Transverse colon (tissue), 4 donors: ENCODE measurements at regions of chr3 and their contacts with region 1.

Region 1: DNA sequence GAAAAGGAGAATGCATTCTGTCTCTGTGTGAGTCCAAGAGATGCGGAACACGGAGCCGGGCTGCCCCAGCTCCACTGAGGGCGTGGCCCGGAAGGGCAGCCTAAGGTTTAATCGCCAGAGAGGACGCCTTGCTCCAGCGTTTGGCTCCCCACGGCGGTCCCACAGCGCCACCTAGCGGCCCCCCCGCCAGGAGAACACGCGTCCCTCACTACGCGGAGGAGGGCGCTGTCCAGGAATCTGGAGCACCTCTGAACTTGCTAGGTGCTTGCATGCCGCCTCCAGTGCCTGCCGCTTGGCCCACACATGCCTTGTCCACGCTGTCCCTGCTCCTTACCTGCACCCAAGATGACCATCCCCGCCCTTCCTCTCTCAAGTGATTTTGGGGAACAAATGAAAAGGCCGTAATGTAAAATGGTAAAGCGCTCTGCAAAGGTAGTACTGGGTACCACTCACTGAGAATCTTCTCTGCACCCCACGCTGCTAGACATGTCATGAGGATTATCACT is 14.4 kb upstream of the MRPS22 start:
- DNase-seq: peak; percentile 92
- H3K4me3 ChIP-seq: peak overlapping the region in 1 of 4 donors; percentile 13
- H3K27ac ChIP-seq: no peak overlapping the region
- H3K4me1 ChIP-seq: peaks cover 0 to 7% (median 2%) of the 10 kb centered on the region in 4 donors
- H3K27me3 ChIP-seq: peaks cover 28% of the 10 kb centered on the region
- CTCF ChIP-seq: peak; percentile 92 to 99 (median 97)
- EP300 ChIP-seq: no peak
- POLR2A ChIP-seq: no peak

Region 2: DNA sequence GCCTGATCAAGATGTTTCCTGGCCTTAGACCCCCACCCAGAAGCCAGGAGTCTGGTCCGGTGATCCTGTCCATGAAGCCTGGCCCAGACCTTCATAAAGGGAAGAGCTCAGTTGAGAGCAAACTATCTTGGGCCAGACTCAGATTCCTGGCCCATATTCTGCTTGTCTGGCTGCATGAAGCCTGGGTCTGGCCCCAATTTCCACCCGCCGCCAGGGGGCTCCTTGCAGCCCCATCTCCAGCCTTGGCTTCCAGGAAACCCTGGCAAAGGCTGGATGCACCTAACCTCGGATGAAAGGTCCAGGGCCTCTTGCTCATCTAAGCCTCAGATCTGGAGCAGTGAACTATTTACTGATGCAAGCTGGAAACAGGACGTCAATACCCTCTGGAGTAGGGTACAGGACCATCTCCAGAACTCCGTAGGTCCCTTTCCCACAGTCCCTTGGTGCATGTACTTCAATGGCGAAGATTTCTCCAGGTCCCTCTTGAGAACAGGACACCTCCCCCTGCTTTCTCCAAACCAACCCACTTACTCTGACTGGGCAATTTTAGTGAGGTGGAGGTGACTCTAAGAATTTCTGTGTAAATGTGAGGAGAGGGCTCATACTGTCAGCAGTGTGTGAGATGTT is 388.0 kb before region 1 on chr3:
- in situ Hi-C with region 1: loop called (anchors 10 to 25 kb)
- intact Hi-C with region 1: loop called (anchors 10 kb)
- DNase-seq: peak; percentile 54
- H3K4me3 ChIP-seq: no peak overlapping the region
- H3K27ac ChIP-seq: no peak overlapping the region
- H3K4me1 ChIP-seq: peaks cover 26 to 61% (median 41%) of the 10 kb centered on the region in 4 donors
- H3K27me3 ChIP-seq: peaks cover 100% of the 10 kb centered on the region
- CTCF ChIP-seq: peak; percentile 21 to 55 (median 41)
- EP300 ChIP-seq: no peak
- POLR2A ChIP-seq: no peak

Region 3: DNA sequence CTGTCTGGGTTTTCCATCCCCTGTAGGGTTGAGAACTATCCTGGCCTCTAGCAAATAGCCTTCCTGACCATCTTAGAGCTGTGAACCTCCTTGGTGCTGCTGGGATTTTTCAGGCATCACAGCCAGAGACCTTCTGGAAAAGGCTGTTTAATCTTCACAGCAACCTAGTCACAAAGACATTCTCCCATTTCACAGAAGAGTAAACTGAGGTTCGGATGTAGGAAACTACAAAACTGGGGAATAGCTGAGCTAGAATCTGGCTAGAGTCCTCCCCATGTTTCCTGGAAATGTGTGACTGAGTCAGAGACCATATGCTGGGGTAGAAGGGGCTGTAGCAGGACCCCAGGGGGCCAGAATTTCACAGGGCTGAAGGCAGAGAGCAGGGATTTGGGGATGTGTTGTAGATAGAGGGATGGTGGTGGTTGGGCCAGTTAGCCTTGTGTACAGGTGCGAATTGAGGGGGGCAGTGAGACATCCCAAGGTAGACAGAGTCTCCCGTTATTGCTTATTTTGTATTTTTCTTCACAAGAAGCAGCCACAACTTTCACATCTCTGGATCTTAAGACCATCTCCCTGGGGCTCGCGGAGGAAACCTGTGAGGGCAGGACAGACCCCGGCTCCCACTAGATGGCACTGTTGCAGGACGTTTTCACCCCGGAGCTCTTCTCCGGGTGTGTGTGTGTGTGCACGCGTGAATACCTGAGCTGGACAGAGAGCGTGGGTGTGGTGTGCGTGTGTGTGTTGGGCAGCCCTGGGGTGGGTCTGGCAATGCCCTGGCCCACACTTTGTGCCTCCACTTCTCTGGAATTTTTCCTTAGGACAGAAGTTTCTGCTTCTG is 217.8 kb before region 1 on chr3:
- in situ Hi-C with region 1: loop called in 2 of 4 experiments (anchors 10 to 25 kb)
- intact Hi-C with region 1: loop called (anchors 5 kb)
- DNase-seq: peak; percentile 74
- H3K4me3 ChIP-seq: no peak overlapping the region
- H3K27ac ChIP-seq: no peak overlapping the region
- H3K4me1 ChIP-seq: peaks cover 0 to 4% (median 2%) of the 10 kb centered on the region in 4 donors
- H3K27me3 ChIP-seq: no peaks in the 10 kb centered on the region
- CTCF ChIP-seq: peak; percentile 64 to 73 (median 67)
- EP300 ChIP-seq: no peak
- POLR2A ChIP-seq: no peak